Activated B cell treated with CpG ODN at 0.5 μM for 24 hours (primary cell): ENCODE measurements at regions of chr21 and their contacts with region 1.

Region 1: GRCh38 chr21:29187944-29188343 is 57.5 kb downstream of the MAP3K7CL start:
- DNase-seq: no peak
- ATAC-seq: no peak
- H3K4me3 Mint-ChIP-seq: no peak overlapping the region
- H3K27ac Mint-ChIP-seq: no peak overlapping the region
- H3K4me1 Mint-ChIP-seq: peaks cover 7% of the 10 kb centered on the region
- H3K27me3 Mint-ChIP-seq: no peaks in the 10 kb centered on the region
- CTCF ChIP-seq: no peak

Region 2: GRCh38 chr21:29104239-29104708 is 83.7 kb before region 1 on chr21:
- CTCF ChIA-PET with region 1: no interaction called
- POLR2A ChIA-PET with region 1: interaction called, 13 read pairs
- intact Hi-C with region 1: no loop called
- DNase-seq: no peak
- ATAC-seq: no peak
- H3K4me3 Mint-ChIP-seq: no peak overlapping the region
- H3K27ac Mint-ChIP-seq: no peak overlapping the region
- H3K4me1 Mint-ChIP-seq: peaks cover 11% of the 10 kb centered on the region
- H3K27me3 Mint-ChIP-seq: no peaks in the 10 kb centered on the region
- CTCF ChIP-seq: no peak

Region 3: DNA sequence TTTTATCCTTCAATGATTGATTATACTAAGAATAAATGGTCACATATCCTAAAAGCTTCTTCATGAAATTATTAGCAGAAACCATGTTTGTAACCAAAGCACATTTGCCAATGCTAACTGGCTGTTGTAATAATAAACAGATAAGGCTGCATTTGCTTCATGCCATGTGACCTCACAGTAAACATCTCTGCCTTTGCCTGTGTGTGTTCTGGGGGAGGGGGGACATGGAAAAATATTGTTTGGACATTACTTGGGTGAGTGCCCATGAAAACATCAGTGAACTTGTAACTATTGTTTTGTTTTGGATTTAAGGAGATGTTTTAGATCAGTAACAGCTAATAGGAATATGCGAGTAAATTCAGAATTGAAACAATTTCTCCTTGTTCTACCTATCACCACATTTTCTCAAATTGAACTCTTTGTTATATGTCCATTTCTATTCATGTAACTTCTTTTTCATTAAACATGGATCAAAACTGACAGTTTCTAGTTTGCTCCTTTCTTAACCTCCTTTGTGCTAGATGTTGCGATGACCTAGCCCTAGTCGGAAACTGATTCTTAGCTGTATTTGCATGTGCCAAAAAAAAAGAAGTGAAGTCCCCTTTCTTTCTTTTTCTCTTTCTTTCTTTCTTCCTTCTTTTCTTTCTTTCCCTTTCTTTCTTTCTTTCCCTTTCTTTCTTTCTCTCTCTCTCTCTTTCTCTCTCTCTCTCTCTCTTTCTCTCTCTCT is 12.4 kb before region 1 on chr21:
- CTCF ChIA-PET with region 1: no interaction called
- POLR2A ChIA-PET with region 1: no interaction called
- intact Hi-C with region 1: loop called (anchors 2 kb)
- DNase-seq: no peak
- ATAC-seq: no peak
- H3K4me3 Mint-ChIP-seq: peak overlapping the region; percentile 52
- H3K27ac Mint-ChIP-seq: peak overlapping the region; percentile 24
- H3K4me1 Mint-ChIP-seq: peaks cover 27% of the 10 kb centered on the region
- H3K27me3 Mint-ChIP-seq: no peaks in the 10 kb centered on the region
- CTCF ChIP-seq: no peak

Region 4: GRCh38 chr21:29248124-29248523 is 60.2 kb after region 1 on chr21:
- CTCF ChIA-PET with region 1: no interaction called
- POLR2A ChIA-PET with region 1: no interaction called
- intact Hi-C with region 1: no loop called
- DNase-seq: no peak
- ATAC-seq: no peak
- H3K4me3 Mint-ChIP-seq: no peak overlapping the region
- H3K27ac Mint-ChIP-seq: no peak overlapping the region
- H3K4me1 Mint-ChIP-seq: peaks cover 6% of the 10 kb centered on the region
- H3K27me3 Mint-ChIP-seq: no peaks in the 10 kb centered on the region
- CTCF ChIP-seq: no peak